Dendritic cell treated with granulocyte-macrophage colony-stimulating factor and Interleukin-4, amounts not matched to agents 40 ng/mL and 50 ng/mL, for 4 days (primary cell): ENCODE measurements at regions of chr20 and their contacts with region 1.

Region 1: DNA sequence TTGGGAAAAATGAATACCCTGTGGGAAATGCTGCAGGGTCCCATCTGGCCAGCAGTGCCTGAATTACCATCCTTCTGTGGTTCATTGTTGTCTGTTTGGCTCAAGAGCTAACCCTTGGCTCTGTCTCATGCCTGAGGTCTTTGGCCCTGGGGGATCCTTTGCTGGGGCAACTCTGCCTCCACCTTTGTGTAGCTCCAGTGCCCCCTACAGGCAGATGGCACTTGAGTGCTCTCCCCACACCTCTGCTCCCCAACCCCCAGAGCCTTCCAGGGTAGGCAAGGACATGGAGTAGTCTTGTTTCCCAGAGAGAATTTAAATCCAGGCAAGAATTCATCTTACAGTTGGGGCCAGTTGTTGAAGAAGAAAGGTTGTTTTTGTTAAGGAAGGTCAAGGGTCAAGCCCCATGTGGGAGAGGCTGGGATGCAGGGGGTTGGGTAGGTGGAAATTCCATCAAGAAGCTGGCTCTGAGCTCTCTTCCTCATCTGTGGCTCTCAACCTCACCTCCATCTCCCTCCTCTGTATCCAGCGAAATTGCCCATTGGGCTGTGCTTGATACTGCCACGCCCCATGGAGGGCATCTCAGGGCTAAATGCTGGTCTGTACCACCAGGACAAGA is 44.2 kb downstream of the ZNF831 start:
- H3K4me3 Mint-ChIP-seq: no peak overlapping the region
- H3K27ac Mint-ChIP-seq: no peak overlapping the region
- H3K4me1 Mint-ChIP-seq: peaks cover 4% of the 10 kb centered on the region
- H3K27me3 Mint-ChIP-seq: peaks cover 12% of the 10 kb centered on the region

Region 2: DNA sequence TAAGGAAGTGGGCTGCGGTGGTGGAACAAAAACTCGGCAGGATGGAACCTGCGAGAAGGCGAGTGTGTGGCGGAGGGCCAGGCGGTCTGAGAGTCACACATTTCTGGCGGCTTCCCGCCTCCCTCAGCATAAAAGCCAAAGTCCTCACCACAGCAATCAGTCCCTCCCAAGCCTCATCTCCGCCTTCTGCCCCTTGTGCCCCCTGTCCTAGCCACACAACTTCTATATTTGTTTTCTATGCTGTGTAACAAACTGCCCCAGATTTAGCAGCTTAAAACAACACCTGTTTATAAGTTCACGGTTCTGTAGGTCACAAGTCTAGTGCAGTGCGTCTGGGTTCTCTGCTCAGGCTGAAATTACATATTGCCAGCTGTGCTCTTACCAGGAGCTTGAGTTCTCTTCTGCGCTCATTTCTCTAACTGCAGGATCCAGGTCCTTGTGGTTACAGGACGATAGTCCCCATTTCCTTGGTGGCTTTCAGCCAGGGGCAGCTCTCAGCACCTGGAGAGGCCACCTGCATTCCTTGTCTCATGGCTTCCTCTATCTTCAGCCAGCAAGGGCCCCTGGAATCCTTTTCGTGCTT is 1890.0 kb before region 1 on chr20:
- intact Hi-C with region 1: no loop called
- H3K4me3 Mint-ChIP-seq: no peak overlapping the region
- H3K27ac Mint-ChIP-seq: no peak overlapping the region
- H3K4me1 Mint-ChIP-seq: no peaks in the 10 kb centered on the region
- H3K27me3 Mint-ChIP-seq: peaks cover 22% of the 10 kb centered on the region

Region 3: DNA sequence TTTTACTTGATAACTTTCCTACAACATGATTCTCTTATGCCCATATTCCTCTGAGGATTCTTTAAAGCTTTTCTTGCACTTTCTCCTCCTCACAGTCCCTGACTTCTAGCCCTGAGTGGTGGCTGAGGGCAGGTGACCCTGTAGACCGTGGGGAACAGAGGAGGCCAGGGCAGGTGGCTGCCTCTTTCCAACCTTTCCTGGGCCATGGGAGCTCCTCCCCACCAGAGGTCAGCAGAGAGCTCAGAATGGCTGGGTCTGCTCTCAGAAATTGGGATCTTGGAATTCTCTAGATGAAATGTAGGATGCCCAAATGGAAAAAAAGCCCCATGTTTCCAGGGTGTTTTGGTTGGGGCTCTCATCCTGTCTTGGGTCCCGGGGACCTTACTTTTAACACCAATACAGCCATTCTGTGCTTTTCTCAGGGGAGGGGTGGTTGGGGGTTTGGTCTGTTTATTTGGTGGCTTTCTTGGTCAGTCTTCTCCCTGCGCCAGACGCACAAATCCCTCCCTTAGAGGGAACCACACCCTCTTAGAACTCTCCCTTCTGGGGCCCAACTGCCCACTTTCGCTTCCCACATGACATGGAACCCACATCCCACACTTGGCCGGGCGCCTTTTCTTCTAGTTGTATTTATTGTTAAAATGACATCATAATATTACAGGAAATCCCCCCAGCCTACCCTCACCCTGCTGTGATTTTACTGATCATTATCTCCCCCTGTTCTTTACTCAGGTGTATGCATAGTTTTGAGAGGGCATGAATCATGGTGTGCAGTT is 337.4 kb before region 1 on chr20:
- intact Hi-C with region 1: loop called (anchors 5 kb)
- H3K4me3 Mint-ChIP-seq: no peak overlapping the region
- H3K27ac Mint-ChIP-seq: no peak overlapping the region
- H3K4me1 Mint-ChIP-seq: peaks cover 13% of the 10 kb centered on the region
- H3K27me3 Mint-ChIP-seq: peaks cover 34% of the 10 kb centered on the region

Region 4: GRCh38 chr20:58911970-58912369 is 295.9 kb before region 1 on chr20:
- intact Hi-C with region 1: no loop called
- H3K4me3 Mint-ChIP-seq: no peak overlapping the region
- H3K27ac Mint-ChIP-seq: no peak overlapping the region
- H3K4me1 Mint-ChIP-seq: peaks cover 15% of the 10 kb centered on the region
- H3K27me3 Mint-ChIP-seq: no peaks in the 10 kb centered on the region

Region 5: GRCh38 chr20:59055295-59055694 is 152.6 kb before region 1 on chr20:
- intact Hi-C with region 1: loop called (anchors 5 kb)
- H3K4me3 Mint-ChIP-seq: no peak overlapping the region
- H3K27ac Mint-ChIP-seq: no peak overlapping the region
- H3K4me1 Mint-ChIP-seq: no peaks in the 10 kb centered on the region
- H3K27me3 Mint-ChIP-seq: peaks cover 32% of the 10 kb centered on the region

Region 6: GRCh38 chr20:59087829-59088433 is 119.9 kb before region 1 on chr20:
- intact Hi-C with region 1: loop called (anchors 2 kb)
- H3K4me3 Mint-ChIP-seq: no peak overlapping the region
- H3K27ac Mint-ChIP-seq: no peak overlapping the region
- H3K4me1 Mint-ChIP-seq: no peaks in the 10 kb centered on the region
- H3K27me3 Mint-ChIP-seq: peaks cover 15% of the 10 kb centered on the region